MCF 10A (cell line): ENCODE measurements at regions of chr5 and their contacts with region 1.

Region 1: DNA sequence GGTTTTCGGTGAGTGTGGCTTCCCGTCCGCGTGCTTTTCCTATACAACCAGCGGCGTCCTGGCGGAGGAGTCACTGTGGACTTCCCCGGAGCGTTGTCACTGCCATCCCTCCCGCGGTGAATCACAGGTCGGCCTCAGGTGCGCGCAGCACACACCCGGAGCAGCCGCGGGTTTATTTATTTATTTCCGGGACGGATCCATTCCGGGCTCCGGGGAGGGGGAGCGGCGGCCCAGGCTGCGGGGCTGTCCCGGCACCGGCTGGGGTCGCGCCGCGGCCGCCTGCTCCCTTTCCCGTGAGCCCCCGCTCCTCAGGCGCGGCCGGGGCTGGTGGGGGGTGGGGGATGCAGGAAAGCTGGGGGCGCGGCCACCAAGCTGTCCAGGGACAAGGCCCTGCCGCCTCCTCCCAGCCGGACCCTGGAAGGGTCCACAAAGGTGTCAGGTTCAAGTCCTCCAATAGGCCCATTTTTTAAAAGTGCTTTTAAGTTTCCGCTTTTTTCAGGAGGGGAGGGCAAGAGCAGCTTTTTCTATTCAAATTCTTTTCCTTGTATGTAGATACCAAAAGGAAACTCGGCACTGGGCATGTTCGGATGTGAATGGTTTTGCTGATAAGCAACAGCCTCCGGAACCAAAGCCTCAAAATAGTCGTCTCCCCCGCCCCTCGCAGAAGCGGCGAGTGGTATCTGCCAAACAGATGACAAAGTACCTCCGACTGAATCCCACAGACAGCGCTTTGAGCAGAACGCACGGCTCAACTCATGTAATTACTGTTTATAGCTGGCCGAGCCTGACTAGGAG is 192.5 kb downstream of the CD180 start:
- DNase-seq: peak; percentile 93
- H3K4me3 Mint-ChIP-seq: peak overlapping the region; percentile 96
- H3K27ac Mint-ChIP-seq: peak overlapping the region; percentile 97
- H3K4me1 Mint-ChIP-seq: peaks cover 36% of the 10 kb centered on the region
- H3K27me3 Mint-ChIP-seq: no peaks in the 10 kb centered on the region
- CTCF ChIP-seq: no peak

Region 2: GRCh38 chr5:66828548-66829357 is 175.4 kb before region 1 on chr5:
- CTCF ChIA-PET with region 1: no interaction called
- POLR2A ChIA-PET with region 1: interaction called, 27 read pairs
- intact Hi-C with region 1: loop called (anchors 5 kb)
- DNase-seq: peak; percentile 67
- H3K4me3 Mint-ChIP-seq: peak overlapping the region; percentile 85
- H3K27ac Mint-ChIP-seq: peak overlapping the region; percentile 90
- H3K4me1 Mint-ChIP-seq: peaks cover 21% of the 10 kb centered on the region
- H3K27me3 Mint-ChIP-seq: no peaks in the 10 kb centered on the region
- CTCF ChIP-seq: no peak

Region 3: DNA sequence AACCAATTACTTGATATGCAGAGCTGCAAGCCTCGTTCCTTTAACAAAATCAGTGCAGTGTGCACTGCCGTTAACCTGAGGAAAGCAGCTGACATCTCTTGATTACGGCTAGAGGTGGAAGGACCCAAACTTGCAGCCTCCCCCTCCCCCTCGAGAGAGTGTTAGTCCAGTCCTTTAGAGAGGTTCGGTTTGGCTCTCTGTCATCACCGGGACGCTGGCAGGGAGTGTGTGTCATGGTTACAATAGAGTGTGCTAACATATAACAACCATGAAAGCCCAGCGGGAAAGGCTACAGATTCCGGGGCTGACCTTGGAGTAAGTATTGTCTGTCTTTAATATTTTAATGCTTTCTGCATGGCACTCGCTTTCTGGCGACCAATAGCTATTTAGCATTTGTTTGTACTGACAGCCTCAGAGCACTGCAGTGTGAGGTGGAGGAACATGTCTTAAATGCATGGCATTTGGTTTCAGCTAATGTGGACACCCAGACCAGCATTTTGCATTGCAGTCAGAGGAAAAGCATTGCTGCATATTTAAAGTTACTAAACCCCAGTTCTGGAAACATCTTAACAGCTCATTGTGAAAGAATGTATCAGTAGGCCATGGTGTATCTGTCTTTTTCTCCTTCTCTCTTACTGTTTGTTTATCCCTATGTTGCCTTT is 45.0 kb before region 1 on chr5:
- CTCF ChIA-PET with region 1: no interaction called
- POLR2A ChIA-PET with region 1: interaction called, 28 read pairs
- intact Hi-C with region 1: no loop called
- DNase-seq: peak; percentile 60
- H3K4me3 Mint-ChIP-seq: peak overlapping the region; percentile 74
- H3K27ac Mint-ChIP-seq: peak overlapping the region; percentile 90
- H3K4me1 Mint-ChIP-seq: peaks cover 34% of the 10 kb centered on the region
- H3K27me3 Mint-ChIP-seq: no peaks in the 10 kb centered on the region
- CTCF ChIP-seq: no peak

Region 4: DNA sequence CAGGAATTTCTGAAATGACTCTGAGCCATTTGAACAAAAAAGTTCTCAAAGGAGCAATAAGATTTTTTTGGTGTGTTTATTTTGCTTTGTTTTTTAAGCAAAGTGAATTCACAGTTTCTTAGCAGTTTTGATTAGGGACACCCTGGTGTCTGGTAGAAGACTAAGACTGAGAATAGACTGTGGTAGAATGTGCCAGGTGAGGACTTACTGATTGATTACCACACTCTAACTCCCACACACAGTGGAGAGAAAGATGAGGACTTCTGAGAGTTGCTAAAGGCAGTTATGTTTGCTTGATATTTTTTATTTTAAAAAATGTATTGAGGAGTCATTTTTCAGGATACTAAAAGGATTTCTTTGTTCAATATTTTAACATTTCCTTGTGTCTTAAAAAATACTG is 17.4 kb after region 1 on chr5:
- CTCF ChIA-PET with region 1: interaction called, 3 read pairs
- POLR2A ChIA-PET with region 1: interaction called, 191 read pairs
- intact Hi-C with region 1: no loop called
- DNase-seq: peak; percentile 61
- H3K4me3 Mint-ChIP-seq: peak overlapping the region; percentile 12
- H3K27ac Mint-ChIP-seq: peak overlapping the region; percentile 40
- H3K4me1 Mint-ChIP-seq: peaks cover 25% of the 10 kb centered on the region
- H3K27me3 Mint-ChIP-seq: no peaks in the 10 kb centered on the region
- CTCF ChIP-seq: no peak

Region 5: GRCh38 chr5:67059744-67060490 is 55.8 kb after region 1 on chr5:
- CTCF ChIA-PET with region 1: interaction called, 3 read pairs
- POLR2A ChIA-PET with region 1: interaction called, 23 read pairs
- intact Hi-C with region 1: loop called (anchors 5 kb)
- DNase-seq: peak; percentile 49
- H3K4me3 Mint-ChIP-seq: peak overlapping the region; percentile 15
- H3K27ac Mint-ChIP-seq: peak overlapping the region; percentile 83
- H3K4me1 Mint-ChIP-seq: peaks cover 39% of the 10 kb centered on the region
- H3K27me3 Mint-ChIP-seq: no peaks in the 10 kb centered on the region
- CTCF ChIP-seq: no peak

Region 6: GRCh38 chr5:67111779-67112178 is 107.6 kb after region 1 on chr5:
- CTCF ChIA-PET with region 1: no interaction called
- POLR2A ChIA-PET with region 1: no interaction called
- intact Hi-C with region 1: no loop called
- DNase-seq: no peak
- H3K4me3 Mint-ChIP-seq: no peak overlapping the region
- H3K27ac Mint-ChIP-seq: no peak overlapping the region
- H3K4me1 Mint-ChIP-seq: no peaks in the 10 kb centered on the region
- H3K27me3 Mint-ChIP-seq: no peaks in the 10 kb centered on the region
- CTCF ChIP-seq: no peak

Region 7: DNA sequence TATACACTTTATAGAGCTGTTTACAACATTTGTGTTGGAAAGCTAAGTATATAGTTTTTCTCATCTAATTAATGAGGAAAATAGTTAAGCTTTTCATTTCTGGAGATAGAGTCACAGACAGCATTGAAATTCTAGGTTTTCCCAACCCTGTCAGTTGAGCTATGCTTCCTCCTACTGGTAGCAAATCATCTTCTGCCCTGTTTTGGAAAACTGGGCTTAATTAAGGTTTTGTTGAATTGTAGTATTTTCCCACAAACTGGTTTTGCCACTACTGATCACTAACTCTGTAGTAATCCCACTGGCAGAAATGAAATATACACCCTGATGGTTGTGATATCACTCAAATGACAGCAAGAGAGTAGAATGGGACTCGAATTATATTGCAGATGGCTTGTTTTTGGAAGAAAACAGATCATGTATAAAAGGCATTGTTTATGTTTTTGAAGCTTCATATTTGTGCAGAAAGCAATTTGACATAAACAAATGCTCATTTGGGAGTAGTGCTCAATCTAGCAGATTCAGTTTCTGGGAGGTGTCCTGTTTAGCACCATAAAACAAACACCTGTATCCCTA is 145.9 kb after region 1 on chr5:
- CTCF ChIA-PET with region 1: interaction called, 3 read pairs
- POLR2A ChIA-PET with region 1: no interaction called
- intact Hi-C with region 1: loop called (anchors 5 kb)
- DNase-seq: no peak
- H3K4me3 Mint-ChIP-seq: no peak overlapping the region
- H3K27ac Mint-ChIP-seq: no peak overlapping the region
- H3K4me1 Mint-ChIP-seq: no peaks in the 10 kb centered on the region
- H3K27me3 Mint-ChIP-seq: no peaks in the 10 kb centered on the region
- CTCF ChIP-seq: peak; percentile 47